ENCODE measurements at regions of chr16 and their contacts with region 1.

Region 1: GRCh38 chr16:75527825-75528299 is 8.0 kb downstream of the CHST5 start:
- DNase-seq: no peak
- H3K4me3 ChIP-seq: no peak overlapping the region
- H3K27ac ChIP-seq: no peak overlapping the region
- H3K4me1 ChIP-seq: no peaks in the 10 kb centered on the region
- H3K27me3 ChIP-seq: no peaks in the 10 kb centered on the region
- CTCF ChIP-seq: no peak

Region 2: GRCh38 chr16:75446416-75446815 is 81.4 kb before region 1 on chr16:
- CTCF ChIA-PET with region 1: interaction called, 22 read pairs
- dilution Hi-C with region 1: no loop called
- in situ Hi-C with region 1: no loop called
- intact Hi-C with region 1: no loop called
- DNase-seq: no peak
- H3K4me3 ChIP-seq: no peak overlapping the region
- H3K27ac ChIP-seq: no peak overlapping the region
- H3K4me1 ChIP-seq: no peaks in the 10 kb centered on the region
- H3K27me3 ChIP-seq: no peaks in the 10 kb centered on the region
- CTCF ChIP-seq: no peak

Region 3: DNA sequence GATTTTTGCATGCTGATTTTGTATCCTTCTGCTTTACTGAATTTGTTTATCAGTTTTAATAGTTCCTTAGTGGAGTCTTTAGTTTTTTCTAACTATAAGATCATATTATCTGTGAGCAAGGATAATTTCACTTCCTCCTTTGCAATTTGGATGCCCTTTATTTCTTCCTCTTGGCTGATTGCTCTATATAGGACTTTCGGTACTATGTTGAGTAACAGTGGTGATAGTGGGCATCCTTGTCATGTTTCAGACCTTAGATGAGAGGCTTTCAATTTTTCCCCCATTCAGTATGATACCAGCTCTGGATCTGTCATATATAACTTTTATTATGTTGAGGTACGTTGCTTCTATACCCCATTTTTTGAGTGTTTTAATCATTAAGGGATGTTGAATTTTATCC is 524.9 kb after region 1 on chr16:
- CTCF ChIA-PET with region 1: no interaction called
- dilution Hi-C with region 1: no loop called
- in situ Hi-C with region 1: no loop called
- intact Hi-C with region 1: no loop called
- DNase-seq: no peak
- H3K4me3 ChIP-seq: no peak overlapping the region
- H3K27ac ChIP-seq: no peak overlapping the region
- H3K4me1 ChIP-seq: no peaks in the 10 kb centered on the region
- H3K27me3 ChIP-seq: no peaks in the 10 kb centered on the region
- CTCF ChIP-seq: no peak